ENCODE measurements at regions of chr6 and their contacts with region 1.

Region 1: GRCh38 chr6:21438237-21438985 is 155.1 kb upstream of the SOX4 start:
- DNase-seq: peak; percentile 73
- H3K4me3 Mint-ChIP-seq: peak overlapping the region; percentile 11
- H3K27ac Mint-ChIP-seq: peak overlapping the region; percentile 66
- H3K4me1 Mint-ChIP-seq: peaks cover 14% of the 10 kb centered on the region
- H3K27me3 Mint-ChIP-seq: peaks cover 6% of the 10 kb centered on the region

Region 2: GRCh38 chr6:20542927-20543602 is 895.3 kb before region 1 on chr6:
- CTCF ChIA-PET with region 1: no interaction called
- POLR2A ChIA-PET with region 1: no interaction called
- intact Hi-C with region 1: loop called (anchors 1 kb)
- DNase-seq: peak; percentile 44
- H3K4me3 Mint-ChIP-seq: no peak overlapping the region
- H3K27ac Mint-ChIP-seq: peak overlapping the region; percentile 42
- H3K4me1 Mint-ChIP-seq: peaks cover 44% of the 10 kb centered on the region
- H3K27me3 Mint-ChIP-seq: no peaks in the 10 kb centered on the region

Region 3: DNA sequence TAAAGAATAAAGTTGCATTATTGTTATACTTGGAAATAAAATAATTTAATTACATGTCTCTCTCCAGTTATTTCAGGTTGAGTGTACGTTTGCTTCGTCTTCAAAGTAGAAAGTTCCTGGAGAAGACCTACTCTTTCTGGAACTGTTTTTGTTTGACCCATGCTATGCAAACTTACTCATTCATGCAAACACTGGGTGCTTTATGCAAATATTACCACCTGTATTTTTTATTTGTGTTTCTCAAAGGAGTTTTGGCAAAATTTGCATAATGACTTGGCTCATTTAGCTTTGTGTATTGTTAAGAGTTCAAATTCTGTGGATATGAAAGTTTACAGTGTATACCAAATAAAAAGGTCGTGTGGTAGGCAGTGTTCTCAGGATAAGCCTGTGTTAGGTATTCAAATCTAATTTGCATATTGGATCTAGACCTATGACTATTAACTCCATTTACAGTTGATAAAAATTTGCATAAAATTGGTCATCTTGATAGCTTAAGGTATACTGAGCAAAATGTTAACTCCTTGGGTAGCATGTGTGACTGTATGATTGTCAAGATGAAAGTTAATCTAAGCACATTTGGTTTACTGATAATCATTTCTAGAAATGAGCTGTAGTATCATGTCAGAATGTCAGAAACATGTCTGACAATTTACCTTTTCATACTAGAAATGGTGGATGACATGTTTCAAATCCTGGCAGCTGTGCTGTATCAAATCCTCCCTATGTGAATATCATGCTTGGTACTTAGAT is 838.9 kb before region 1 on chr6:
- CTCF ChIA-PET with region 1: no interaction called
- POLR2A ChIA-PET with region 1: no interaction called
- intact Hi-C with region 1: loop called (anchors 1 kb)
- DNase-seq: no peak
- H3K4me3 Mint-ChIP-seq: no peak overlapping the region
- H3K27ac Mint-ChIP-seq: no peak overlapping the region
- H3K4me1 Mint-ChIP-seq: peaks cover 11% of the 10 kb centered on the region
- H3K27me3 Mint-ChIP-seq: no peaks in the 10 kb centered on the region

Region 4: DNA sequence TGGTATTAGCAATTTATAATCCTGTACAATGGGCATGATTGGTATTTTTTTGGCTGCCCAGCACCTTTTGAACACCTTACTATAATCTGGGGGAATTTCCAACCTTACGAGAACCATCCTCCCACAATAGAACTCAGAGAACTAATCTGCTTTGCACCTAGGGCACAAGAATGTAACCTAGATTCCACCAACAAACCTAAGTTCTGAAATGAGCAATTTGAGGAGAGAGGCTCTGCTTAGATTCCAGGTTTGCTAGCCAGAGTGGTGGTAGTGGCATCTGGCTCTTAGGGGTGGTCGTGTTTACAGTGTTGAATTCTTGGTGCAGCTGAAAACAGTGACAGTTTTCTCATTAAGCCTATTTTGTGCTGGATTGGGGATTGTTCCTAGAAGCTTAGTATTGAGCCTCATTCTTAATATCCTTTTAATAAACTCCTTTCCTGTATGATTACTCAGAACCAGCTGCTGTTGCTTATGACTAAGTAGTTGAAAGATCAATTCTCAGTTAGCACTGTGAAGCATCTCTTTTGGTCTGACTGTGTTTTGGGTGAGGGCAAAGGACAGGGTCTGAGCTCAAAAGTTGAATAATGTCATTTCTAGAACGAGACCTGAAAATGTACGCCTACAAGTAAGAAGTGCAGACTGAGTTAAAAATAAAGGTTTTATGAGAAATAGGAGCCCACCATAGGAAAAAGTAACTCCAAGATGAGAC is 518.6 kb before region 1 on chr6:
- CTCF ChIA-PET with region 1: no interaction called
- POLR2A ChIA-PET with region 1: no interaction called
- intact Hi-C with region 1: loop called (anchors 1 kb)
- DNase-seq: peak; percentile 39
- H3K4me3 Mint-ChIP-seq: no peak overlapping the region
- H3K27ac Mint-ChIP-seq: peak overlapping the region; percentile 80
- H3K4me1 Mint-ChIP-seq: peaks cover 28% of the 10 kb centered on the region
- H3K27me3 Mint-ChIP-seq: no peaks in the 10 kb centered on the region

Region 5: GRCh38 chr6:21189759-21190158 is 248.7 kb before region 1 on chr6:
- CTCF ChIA-PET with region 1: no interaction called
- POLR2A ChIA-PET with region 1: no interaction called
- intact Hi-C with region 1: loop called (anchors 1 kb)
- DNase-seq: no peak
- H3K4me3 Mint-ChIP-seq: no peak overlapping the region
- H3K27ac Mint-ChIP-seq: no peak overlapping the region
- H3K4me1 Mint-ChIP-seq: peaks cover 27% of the 10 kb centered on the region
- H3K27me3 Mint-ChIP-seq: no peaks in the 10 kb centered on the region

Region 6: GRCh38 chr6:21402368-21402767 is 36.0 kb before region 1 on chr6:
- CTCF ChIA-PET with region 1: no interaction called
- POLR2A ChIA-PET with region 1: interaction called, 3 read pairs
- intact Hi-C with region 1: loop called (anchors 1 kb)
- DNase-seq: peak; percentile 72
- H3K4me3 Mint-ChIP-seq: no peak overlapping the region
- H3K27ac Mint-ChIP-seq: no peak overlapping the region
- H3K4me1 Mint-ChIP-seq: peaks cover 11% of the 10 kb centered on the region
- H3K27me3 Mint-ChIP-seq: peaks cover 17% of the 10 kb centered on the region

Measured in activated CD4-positive, alpha-beta memory T cell treated with anti-CD3 and anti-CD28 coated beads for 36 hours (primary cell).